Dorsolateral prefrontal cortex (tissue), 120 donors: ENCODE measurements at regions of chr5 and their contacts with region 1.

Region 1: GRCh38 chr5:177454397-177455035 is 7.9 kb downstream of the PRR7 start:
- DNase-seq: peak; percentile 77 to 91 (median 88)
- H3K4me3 ChIP-seq: peak overlapping the region; percentile 40 to 73 (median 63)
- H3K27ac ChIP-seq: peak overlapping the region in 55 of 59 donors; percentile 47 to 92 (median 79)
- H3K27me3 ChIP-seq: no peaks in the 10 kb centered on the region
- CTCF ChIP-seq: peak; percentile 53 to 98 (median 92)

Region 2: DNA sequence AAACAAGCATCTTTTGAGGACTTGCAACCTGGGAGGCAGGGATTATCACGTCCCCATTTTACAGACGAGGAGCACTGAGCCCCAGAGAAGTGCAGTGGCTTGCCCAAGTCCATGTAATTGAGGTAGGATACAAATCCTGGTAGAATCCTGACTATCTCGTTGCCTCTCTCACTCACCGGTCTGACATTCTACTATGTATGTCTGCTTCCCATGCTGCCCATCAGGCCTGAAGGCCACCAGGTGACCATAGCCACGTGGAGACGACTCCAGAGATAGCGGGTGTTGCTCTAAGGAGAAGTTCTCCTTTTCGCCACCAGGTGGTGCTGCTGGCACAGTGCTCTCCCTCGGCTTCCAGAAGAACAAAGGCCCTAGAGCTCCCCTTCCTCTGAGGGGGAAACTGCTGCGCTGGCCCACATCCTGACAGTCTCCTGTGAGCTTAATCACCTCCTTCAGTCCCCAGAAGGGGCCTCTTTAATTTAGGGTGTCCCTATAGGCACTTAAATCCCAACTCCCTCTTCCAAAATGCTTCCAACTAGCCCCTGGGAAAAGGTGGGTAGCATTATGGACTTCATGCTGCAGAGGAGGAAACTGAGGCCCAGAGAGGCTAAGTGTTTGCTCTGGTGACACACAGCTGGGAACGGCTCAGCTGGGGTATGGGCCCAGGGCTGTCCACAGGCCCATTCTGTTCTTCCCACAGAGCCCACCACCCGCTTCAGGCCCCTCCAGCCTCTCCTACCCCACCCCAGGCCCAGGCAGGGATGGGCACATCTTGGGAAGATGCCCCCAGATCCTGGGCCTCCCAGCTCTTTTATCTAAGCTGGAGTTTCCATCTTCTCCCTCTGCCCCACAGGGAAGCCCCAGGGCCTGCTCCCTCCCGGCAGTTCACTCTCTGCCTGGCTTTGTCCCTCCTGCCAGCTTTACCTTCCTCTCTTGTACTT is 63.9 kb before region 1 on chr5:
- intact Hi-C with region 1: loop called (anchors 1 to 2 kb)
- DNase-seq: peak; percentile 63 to 85 (median 82)
- H3K4me3 ChIP-seq: no peak overlapping the region
- H3K27ac ChIP-seq: no peak overlapping the region
- H3K27me3 ChIP-seq: peaks cover 0 to 8% (median 0%) of the 10 kb centered on the region in 45 donors
- CTCF ChIP-seq: peak; percentile 93 to 100 (median 99)

Region 3: DNA sequence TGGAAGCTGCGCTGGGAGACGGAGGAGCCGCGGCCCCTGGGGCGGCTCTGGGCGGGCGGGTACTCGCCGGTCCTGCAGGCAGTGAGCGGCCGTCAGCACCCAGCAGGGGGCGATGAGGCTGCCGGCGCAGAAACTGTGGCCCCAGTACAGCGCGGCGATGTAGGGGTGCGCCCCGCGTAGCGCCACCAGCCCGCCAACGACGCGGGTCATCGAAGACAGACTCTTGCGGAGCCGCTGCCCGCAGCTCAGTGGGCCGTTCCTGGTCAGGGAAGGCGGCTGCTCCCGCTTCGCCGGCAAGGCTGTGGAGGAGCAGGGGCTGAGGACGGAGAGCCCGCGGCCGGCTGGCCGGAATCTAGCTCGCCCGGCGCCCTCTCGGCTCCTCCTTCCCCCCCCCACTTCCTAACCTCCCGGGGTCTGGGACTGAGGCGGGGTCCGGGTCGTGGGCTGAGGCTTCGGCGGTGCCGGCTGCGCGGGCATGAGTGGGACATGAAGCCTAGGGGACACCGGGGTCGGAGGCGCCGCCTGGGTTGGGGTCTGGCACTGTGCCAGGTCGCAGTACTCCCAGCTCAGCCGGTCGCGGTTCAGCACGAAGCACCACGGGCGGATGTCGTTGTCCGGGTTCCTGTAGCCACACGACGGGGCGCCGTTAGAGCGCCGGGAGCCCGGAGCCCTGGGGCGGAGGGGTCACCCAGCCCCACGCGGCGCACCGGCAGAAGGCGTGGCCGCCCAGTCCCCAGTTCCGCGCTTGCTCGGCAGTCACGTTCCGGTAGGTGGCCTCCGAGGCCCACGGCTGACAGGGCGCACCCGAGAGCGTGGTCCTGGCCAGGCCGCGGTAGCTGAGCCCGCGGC is 50.5 kb before region 1 on chr5:
- intact Hi-C with region 1: loop called (anchors 1 kb)
- DNase-seq: peak in 9 of 10 donors; percentile 72 to 83 (median 76)
- H3K4me3 ChIP-seq: peak overlapping the region; percentile 46 to 78 (median 61)
- H3K27ac ChIP-seq: peak overlapping the region in 33 of 59 donors; percentile 10 to 80 (median 55)
- H3K27me3 ChIP-seq: peaks cover 0 to 61% (median 46%) of the 10 kb centered on the region in 45 donors
- CTCF ChIP-seq: peak; percentile 34 to 81 (median 66)

Region 4: GRCh38 chr5:177497292-177498033 is 42.9 kb after region 1 on chr5 and contains the start of gene PDLIM7:
- intact Hi-C with region 1: loop called (anchors 2 kb)
- DNase-seq: peak; percentile 40 to 93 (median 87)
- H3K4me3 ChIP-seq: peak within 1 kb of the TSS; percentile 40 to 86 (median 73)
- H3K27ac ChIP-seq: peak within 1 kb of the TSS in 49 of 59 donors; percentile 24 to 90 (median 70)
- H3K27me3 ChIP-seq: peaks cover 0 to 10% (median 0%) of the 10 kb centered on the region in 45 donors
- CTCF ChIP-seq: peak in 22 of 56 donors; percentile 7 to 41 (median 20)
- total RNA-seq, gene PDLIM7: 12.0 to 88.0 (median 35.5) TPM